H1 (cell line): ENCODE measurements at regions of chr11 and their contacts with region 1.

Region 1: DNA sequence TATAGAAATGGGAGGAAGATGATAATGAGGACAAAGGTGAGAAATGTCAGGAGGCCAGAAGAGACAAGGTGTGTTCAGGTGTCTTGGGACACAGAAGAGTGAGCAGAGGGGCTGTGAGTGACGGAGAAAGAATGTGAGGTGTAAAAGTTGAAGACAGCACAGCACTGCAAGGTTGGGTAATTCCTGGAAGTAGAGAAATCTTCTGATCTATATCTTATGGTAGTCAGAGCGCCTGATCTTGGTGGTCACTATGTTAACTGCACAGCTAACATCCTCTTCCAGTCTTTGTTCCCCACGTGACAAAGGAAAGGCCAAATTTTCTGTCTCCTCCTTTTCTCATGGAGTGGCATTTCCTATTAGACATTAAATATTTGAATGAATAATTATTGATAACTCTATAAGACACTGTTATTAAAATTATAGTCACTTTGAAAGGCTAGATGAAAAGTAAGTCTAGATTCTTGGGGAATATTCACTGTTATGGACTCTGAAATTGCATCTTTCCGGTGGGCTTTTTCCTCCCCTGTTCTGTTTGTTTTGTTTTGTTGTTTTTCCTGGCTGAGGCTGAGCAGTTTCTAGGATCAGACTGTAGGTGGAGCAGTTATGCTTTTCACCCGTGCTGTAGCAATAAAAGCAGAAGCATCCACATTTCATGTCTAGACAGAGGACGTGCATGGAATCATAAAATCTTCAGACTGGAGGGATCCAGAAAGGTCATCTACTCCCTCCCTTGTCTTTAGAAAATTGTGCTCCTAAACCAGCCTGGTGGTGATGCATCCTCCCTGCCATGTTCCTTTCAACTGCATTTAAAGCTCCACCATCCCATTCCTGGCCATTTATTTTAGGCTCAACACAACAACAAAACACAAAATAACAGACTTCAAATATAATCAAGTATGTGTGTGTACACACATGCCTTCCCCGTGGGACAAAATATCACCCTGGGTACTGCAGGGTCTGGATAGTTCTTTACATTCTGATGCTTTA is 26.6 kb downstream of the SC5D start:
- DNase-seq: no peak
- H3K4me3 ChIP-seq: no peak overlapping the region
- H3K27ac ChIP-seq: no peak overlapping the region
- H3K4me1 ChIP-seq: peaks cover 0 to 3% (median 3%) of the 10 kb centered on the region in 4 experiments; a peak in 3 of 7 replicates
- H3K27me3 ChIP-seq: no peaks in the 10 kb centered on the region
- CTCF ChIP-seq: peak in 2 of 3 experiments; percentile 66 to 80; a peak in 2 of 4 replicates
- EP300 ChIP-seq: no peak
- POLR2A ChIP-seq: no peak
- RAD21 ChIP-seq: peak; percentile 83 to 88

Region 2: DNA sequence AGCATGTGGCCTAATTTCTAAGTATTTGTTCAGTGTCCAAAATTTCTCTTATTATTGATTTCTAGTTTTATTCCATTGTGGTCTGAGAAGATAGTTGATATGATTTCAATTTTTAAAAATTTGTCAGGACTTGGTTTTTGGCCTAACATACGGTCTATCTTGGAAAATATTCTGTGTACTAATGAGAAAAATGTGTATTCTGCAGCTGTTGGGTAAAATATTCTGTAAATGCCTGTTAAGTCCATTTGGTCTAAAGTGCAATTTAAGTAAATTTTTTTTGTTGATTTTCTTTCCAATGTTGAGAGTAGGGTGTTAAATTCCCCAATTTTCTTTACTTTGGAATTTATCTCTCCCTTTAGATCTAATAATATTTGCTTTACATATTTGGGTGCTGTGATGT is 139.8 kb before region 1 on chr11:
- CTCF ChIA-PET with region 1: no interaction called
- POLR2A ChIA-PET with region 1: no interaction called
- DNase-seq: no peak
- H3K4me3 ChIP-seq: no peak overlapping the region
- H3K27ac ChIP-seq: no peak overlapping the region
- H3K4me1 ChIP-seq: no peaks in the 10 kb centered on the region
- H3K27me3 ChIP-seq: no peaks in the 10 kb centered on the region
- CTCF ChIP-seq: no peak
- EP300 ChIP-seq: no peak
- POLR2A ChIP-seq: no peak
- RAD21 ChIP-seq: no peak

Region 3: GRCh38 chr11:121508449-121508848 is 189.3 kb after region 1 on chr11:
- CTCF ChIA-PET with region 1: no interaction called
- POLR2A ChIA-PET with region 1: no interaction called
- DNase-seq: no peak
- H3K4me3 ChIP-seq: no peak overlapping the region
- H3K27ac ChIP-seq: peak overlapping the region; percentile 72; the same call in 1 of the 2 replicates
- H3K4me1 ChIP-seq: peaks cover 0 to 5% (median 0%) of the 10 kb centered on the region in 4 experiments; a peak in 4 of 7 replicates
- H3K27me3 ChIP-seq: no peaks in the 10 kb centered on the region
- CTCF ChIP-seq: no peak
- EP300 ChIP-seq: peak in 1 of 2 experiments; percentile 40; a peak in 1 of 3 replicates
- POLR2A ChIP-seq: no peak
- RAD21 ChIP-seq: no peak

Region 4: GRCh38 chr11:121555121-121555520 is 236.0 kb after region 1 on chr11:
- CTCF ChIA-PET with region 1: interaction called, 10 read pairs
- POLR2A ChIA-PET with region 1: no interaction called
- DNase-seq: no peak
- H3K4me3 ChIP-seq: no peak overlapping the region
- H3K27ac ChIP-seq: no peak overlapping the region
- H3K4me1 ChIP-seq: no peaks in the 10 kb centered on the region
- H3K27me3 ChIP-seq: no peaks in the 10 kb centered on the region
- CTCF ChIP-seq: no peak
- EP300 ChIP-seq: no peak
- POLR2A ChIP-seq: no peak
- RAD21 ChIP-seq: no peak

Region 5: DNA sequence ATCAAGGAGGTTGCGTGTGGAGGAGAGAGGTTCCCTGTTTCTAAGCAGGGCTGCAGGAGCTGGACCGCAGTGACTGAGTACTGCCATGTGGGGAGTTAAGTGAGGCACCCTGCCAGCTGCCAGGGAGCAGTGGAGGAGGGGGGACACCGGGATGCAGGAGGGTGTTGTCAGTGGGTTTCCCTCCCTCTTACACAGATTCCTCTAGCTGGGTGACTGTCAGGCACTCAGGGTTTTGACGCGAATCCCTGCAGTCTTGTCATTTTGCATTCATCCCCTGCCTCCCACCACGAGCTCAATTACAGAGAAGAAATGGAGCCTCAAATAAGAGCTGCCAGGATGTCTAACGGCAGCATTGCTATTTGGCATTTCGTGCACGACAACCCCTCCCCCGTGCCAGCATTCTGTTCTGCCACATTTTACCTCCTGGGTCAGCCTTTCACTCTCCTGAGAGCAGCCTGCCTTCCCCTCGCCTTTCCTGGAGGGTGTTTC is 253.5 kb after region 1 on chr11:
- CTCF ChIA-PET with region 1: interaction called, 11 read pairs
- POLR2A ChIA-PET with region 1: no interaction called
- DNase-seq: no peak
- H3K4me3 ChIP-seq: no peak overlapping the region
- H3K27ac ChIP-seq: no peak overlapping the region
- H3K4me1 ChIP-seq: no peaks in the 10 kb centered on the region
- H3K27me3 ChIP-seq: no peaks in the 10 kb centered on the region
- CTCF ChIP-seq: no peak
- EP300 ChIP-seq: no peak
- POLR2A ChIP-seq: no peak
- RAD21 ChIP-seq: no peak

Region 6: GRCh38 chr11:121591405-121592033 is 272.4 kb after region 1 on chr11:
- CTCF ChIA-PET with region 1: interaction called, 12 read pairs
- POLR2A ChIA-PET with region 1: no interaction called
- DNase-seq: peak; percentile 23 to 81
- H3K4me3 ChIP-seq: no peak overlapping the region
- H3K27ac ChIP-seq: no peak overlapping the region
- H3K4me1 ChIP-seq: peaks cover 0 to 3% (median 0%) of the 10 kb centered on the region in 4 experiments; a peak in 1 of 7 replicates
- H3K27me3 ChIP-seq: no peaks in the 10 kb centered on the region
- CTCF ChIP-seq: peak; percentile 39 to 93 (median 78)
- EP300 ChIP-seq: no peak
- POLR2A ChIP-seq: no peak
- RAD21 ChIP-seq: peak; percentile 92 to 95